Activated naive CD4-positive, alpha-beta T cell treated with anti-CD3 and anti-CD28 coated beads, Interleukin-2, amount 10 ng/mL, durations not matched to agents 7 days and 5 days (primary cell): ENCODE measurements at regions of chr2 and their contacts with region 1.

Region 1: DNA sequence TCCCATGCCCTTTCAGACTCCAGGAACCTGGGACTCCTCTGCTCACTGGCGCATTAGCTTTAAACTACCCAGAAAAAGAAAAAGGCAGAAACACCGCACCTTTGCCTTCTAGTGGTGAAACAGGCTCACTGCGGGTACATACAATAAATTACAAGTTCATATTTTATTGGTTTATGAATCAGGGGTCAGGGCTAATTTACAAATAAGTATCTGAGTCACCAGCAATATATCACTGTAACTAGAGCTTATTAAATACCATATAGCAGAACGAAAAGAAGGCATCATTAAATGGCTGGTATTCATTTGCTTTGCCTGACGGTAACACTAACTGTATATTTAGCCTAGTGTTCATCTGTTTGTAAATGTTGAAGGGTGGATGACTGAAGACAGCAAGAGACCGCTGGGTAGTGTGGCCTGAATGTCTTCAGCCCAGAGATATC is 26.9 kb upstream of the DTNB start:
- DNase-seq: peak; percentile 44
- H3K4me3 Mint-ChIP-seq: no peak overlapping the region
- H3K27ac Mint-ChIP-seq: no peak overlapping the region
- H3K4me1 Mint-ChIP-seq: peaks cover 2% of the 10 kb centered on the region
- H3K27me3 Mint-ChIP-seq: peaks cover 14% of the 10 kb centered on the region

Region 2: GRCh38 chr2:25606892-25607291 is 93.3 kb before region 1 on chr2:
- CTCF ChIA-PET with region 1: interaction called, 64 read pairs
- DNase-seq: no peak
- H3K4me3 Mint-ChIP-seq: no peak overlapping the region
- H3K27ac Mint-ChIP-seq: no peak overlapping the region
- H3K4me1 Mint-ChIP-seq: peaks cover 7% of the 10 kb centered on the region
- H3K27me3 Mint-ChIP-seq: no peaks in the 10 kb centered on the region

Region 3: DNA sequence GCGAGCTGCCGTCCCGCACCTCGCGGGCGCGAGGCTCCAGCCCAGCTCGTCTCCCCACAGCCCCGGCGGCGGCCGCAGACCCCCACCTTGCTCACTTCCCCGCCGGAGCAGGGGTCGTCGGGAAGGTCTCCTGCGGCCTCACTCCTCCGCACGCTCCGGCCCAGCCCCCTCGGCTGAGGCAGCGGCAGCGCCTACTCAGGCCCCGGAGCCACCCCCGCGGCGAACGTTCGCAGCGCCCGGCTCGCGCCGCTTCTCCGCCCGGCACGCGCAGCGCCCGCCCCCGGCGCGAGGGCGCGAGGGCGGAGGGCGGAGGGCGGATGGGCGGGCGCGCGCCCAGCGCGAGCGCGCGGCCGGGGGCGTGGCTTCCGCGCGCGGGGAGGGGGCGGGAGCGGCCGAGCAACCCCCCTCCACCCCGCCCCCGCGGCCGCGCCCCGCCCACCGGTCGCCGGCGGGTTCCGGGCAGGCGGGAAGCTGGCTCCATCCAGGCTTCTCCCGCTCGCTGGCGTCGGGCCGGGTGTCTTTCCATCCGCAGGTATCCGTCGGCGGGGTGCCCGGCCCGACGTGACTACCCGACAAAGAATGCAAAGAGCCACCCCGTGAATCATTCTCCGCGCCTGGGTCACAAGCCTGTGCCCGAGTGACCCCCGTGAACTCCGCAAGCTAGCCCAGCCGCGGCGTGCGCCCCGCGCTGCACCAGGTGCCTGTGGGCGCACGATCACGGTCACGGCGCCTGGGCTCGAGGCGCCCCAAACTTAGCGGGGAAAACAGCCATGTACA is 26.8 kb before region 1 on chr2 and contains the start of gene DTNB:
- CTCF ChIA-PET with region 1: interaction called, 15 read pairs
- DNase-seq: peak; percentile 86
- H3K4me3 Mint-ChIP-seq: peak within 1 kb of the TSS; percentile 84
- H3K27ac Mint-ChIP-seq: peak within 1 kb of the TSS; percentile 87
- H3K4me1 Mint-ChIP-seq: peaks cover 31% of the 10 kb centered on the region
- H3K27me3 Mint-ChIP-seq: peaks cover 29% of the 10 kb centered on the region

Region 4: GRCh38 chr2:25690058-25690457 is 10.2 kb before region 1 on chr2:
- CTCF ChIA-PET with region 1: interaction called, 11 read pairs
- DNase-seq: no peak
- H3K4me3 Mint-ChIP-seq: no peak overlapping the region
- H3K27ac Mint-ChIP-seq: peak overlapping the region; percentile 10
- H3K4me1 Mint-ChIP-seq: no peaks in the 10 kb centered on the region
- H3K27me3 Mint-ChIP-seq: peaks cover 16% of the 10 kb centered on the region

Region 5: DNA sequence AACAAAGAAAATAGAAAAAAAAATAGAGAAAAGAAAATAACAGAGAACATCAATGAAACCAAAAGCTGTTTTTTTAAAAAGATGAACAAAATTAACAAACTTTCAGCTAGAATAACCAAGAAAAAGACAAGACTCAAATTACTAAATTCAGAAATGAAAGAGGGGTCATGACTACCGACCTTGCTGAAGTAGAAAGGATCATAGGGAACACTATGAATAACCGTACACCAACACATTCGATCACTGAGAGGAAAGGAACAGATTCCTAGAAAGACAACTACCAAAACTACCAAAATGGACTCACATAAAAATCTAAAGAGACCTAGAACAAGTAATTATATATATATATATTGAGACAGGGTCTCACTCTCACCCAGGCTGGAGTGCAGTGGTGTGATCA is 10.5 kb after region 1 on chr2:
- CTCF ChIA-PET with region 1: interaction called, 12 read pairs
- DNase-seq: no peak
- H3K4me3 Mint-ChIP-seq: no peak overlapping the region
- H3K27ac Mint-ChIP-seq: no peak overlapping the region
- H3K4me1 Mint-ChIP-seq: peaks cover 10% of the 10 kb centered on the region
- H3K27me3 Mint-ChIP-seq: peaks cover 48% of the 10 kb centered on the region